Naive thymus-derived CD4-positive, alpha-beta T cell (primary cell): ENCODE measurements at regions of chr16 and their contacts with region 1.

Region 1: GRCh38 chr16:70251629-70252354 is at the start of gene EXOSC6:
- DNase-seq: peak; percentile 85 to 94 (median 93)
- ATAC-seq: peak; percentile 99
- H3K4me3 ChIP-seq: peak within 1 kb of the TSS; percentile 67
- H3K4me3 Mint-ChIP-seq: peak within 1 kb of the TSS; percentile 82 to 93 (median 90)
- H3K27ac ChIP-seq: peak within 1 kb of the TSS; percentile 85
- H3K27ac Mint-ChIP-seq: peak within 1 kb of the TSS; percentile 86 to 96 (median 92)
- H3K4me1 ChIP-seq: peaks cover 5 to 15% of the 10 kb centered on the region in 2 donors
- H3K4me1 Mint-ChIP-seq: peaks cover 0 to 41% (median 24%) of the 10 kb centered on the region in 7 donors
- H3K27me3 ChIP-seq: no peaks in the 10 kb centered on the region
- H3K27me3 Mint-ChIP-seq: no peaks in the 10 kb centered on the region
- total RNA-seq, gene EXOSC6: 25.5 to 45.9 (median 36.4) TPM

Region 2: GRCh38 chr16:70267516-70267915 is 15.7 kb after region 1 on chr16:
- CTCF ChIA-PET with region 1: interaction called, 3 read pairs
- POLR2A ChIA-PET with region 1: interaction called, 10 read pairs
- intact Hi-C with region 1: loop called in 1 of 2 experiments (anchors 1 kb)
- DNase-seq: peak in 1 of 9 donors; percentile 22
- ATAC-seq: peak; percentile 61
- H3K4me3 ChIP-seq: no peak overlapping the region
- H3K4me3 Mint-ChIP-seq: no peak overlapping the region
- H3K27ac ChIP-seq: no peak overlapping the region
- H3K27ac Mint-ChIP-seq: peak overlapping the region in 4 of 9 donors; percentile 2 to 57 (median 38)
- H3K4me1 ChIP-seq: no peaks in the 10 kb centered on the region
- H3K4me1 Mint-ChIP-seq: peaks cover 0 to 4% (median 0%) of the 10 kb centered on the region in 7 donors
- H3K27me3 ChIP-seq: no peaks in the 10 kb centered on the region
- H3K27me3 Mint-ChIP-seq: no peaks in the 10 kb centered on the region

Region 3: DNA sequence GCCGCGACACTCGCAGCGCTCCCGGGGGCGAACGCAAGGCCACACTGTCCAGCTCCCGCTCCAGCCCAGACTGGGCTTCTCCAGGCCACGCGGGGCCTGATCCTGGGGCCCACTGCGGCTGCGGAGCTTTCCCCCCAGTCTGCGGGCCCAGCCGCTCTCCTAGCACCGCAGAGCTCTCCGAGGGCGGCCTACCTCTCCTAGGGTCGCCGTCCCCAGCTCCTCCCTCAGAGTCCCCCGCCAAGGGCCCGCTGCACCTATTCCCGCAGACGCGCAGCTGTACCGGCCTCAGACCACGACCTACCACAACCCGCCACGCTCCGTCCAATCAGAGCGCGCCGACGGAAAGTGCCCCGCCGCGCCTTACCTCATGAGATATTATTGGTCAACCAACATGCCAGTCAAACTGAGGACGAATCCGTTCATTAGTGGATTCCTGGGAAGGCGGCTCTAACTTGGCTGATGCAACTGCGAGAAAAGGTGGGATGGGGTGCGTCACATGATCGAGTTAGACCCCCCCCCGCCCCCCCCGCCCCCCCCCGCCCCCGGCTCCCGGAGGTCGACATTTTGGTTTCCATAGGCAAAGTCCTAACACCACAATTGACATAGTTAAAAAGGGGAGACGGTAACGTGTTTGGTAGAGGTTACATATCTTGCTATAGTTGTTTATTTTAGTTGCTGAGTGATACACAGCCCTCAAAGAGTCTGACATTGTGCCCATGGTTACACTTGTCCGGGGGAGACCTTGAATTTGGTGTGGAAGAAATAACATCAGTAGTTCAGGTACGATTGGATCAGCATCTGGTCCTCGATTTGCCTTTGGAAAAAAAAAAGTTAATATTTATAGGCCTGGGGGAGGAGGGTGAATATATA is 37.7 kb after region 1 on chr16 and contains the start of gene AARS1:
- CTCF ChIA-PET with region 1: interaction called, 7 read pairs
- POLR2A ChIA-PET with region 1: interaction called, 6 read pairs
- intact Hi-C with region 1: loop called (anchors 1 kb)
- DNase-seq: peak; percentile 79 to 97 (median 96)
- ATAC-seq: peak; percentile 98
- H3K4me3 ChIP-seq: peak within 1 kb of the TSS; percentile 65
- H3K4me3 Mint-ChIP-seq: peak within 1 kb of the TSS; percentile 90 to 100 (median 98)
- H3K27ac ChIP-seq: peak within 1 kb of the TSS; percentile 85
- H3K27ac Mint-ChIP-seq: peak within 1 kb of the TSS; percentile 95 to 99 (median 98)
- H3K4me1 ChIP-seq: no peaks in the 10 kb centered on the region
- H3K4me1 Mint-ChIP-seq: peaks cover 6 to 37% (median 25%) of the 10 kb centered on the region in 7 donors
- H3K27me3 ChIP-seq: no peaks in the 10 kb centered on the region
- H3K27me3 Mint-ChIP-seq: peaks cover 0 to 2% (median 0%) of the 10 kb centered on the region in 5 donors
- total RNA-seq, gene AARS1: 24.2 to 96.7 (median 94.0) TPM

Region 4: DNA sequence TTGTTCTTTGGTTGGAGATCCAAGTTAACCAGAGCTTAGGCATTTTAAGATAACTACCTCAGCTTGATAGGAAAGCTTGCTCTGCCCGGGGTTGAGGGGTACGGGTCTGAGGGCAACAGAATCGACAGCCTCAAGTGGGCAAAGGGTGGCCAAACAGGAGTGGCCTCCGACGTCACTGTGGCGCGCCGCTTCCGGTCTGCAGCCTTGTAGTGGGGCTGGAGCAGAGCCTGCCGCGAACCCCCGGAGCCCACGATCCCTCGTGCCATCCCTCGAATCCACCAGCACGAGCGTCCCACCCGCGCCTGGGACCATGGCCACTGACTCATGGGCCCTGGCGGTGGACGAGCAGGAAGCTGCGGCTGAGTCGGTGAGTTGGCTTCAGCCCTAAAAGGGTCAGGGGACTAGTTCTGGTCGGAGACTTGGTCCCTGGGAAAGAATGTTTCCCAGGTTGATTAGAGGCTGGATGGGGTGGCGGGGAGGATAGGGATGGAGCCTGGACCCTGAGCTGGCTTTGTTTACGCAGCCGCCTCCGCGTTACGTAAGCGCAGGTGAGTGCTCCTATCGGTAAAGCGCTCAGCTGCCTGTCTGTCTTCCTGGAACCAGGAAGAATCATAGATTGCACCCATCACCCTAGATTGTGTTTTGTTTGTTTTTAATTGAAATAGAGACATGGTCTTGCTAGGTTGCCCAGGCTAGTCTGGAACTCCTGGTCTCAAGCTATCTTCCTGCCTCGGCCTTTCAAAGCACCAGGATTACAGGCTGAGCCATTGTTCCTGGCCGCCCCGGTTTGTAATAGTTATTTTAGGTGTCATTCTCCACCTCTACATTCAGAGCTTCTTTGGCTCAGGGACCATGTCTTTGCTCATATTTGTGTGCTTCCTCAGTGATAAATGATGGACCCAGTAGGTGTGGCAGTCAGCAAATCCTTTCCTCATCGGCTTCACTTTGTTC is 47.5 kb after region 1 on chr16 and contains the start of gene DDX19B:
- CTCF ChIA-PET with region 1: no interaction called
- POLR2A ChIA-PET with region 1: interaction called, 13 read pairs
- intact Hi-C with region 1: loop called in 1 of 2 experiments (anchors 2 kb)
- DNase-seq: peak; percentile 28 to 69 (median 51)
- ATAC-seq: peak; percentile 83
- H3K4me3 ChIP-seq: peak within 1 kb of the TSS; percentile 86
- H3K4me3 Mint-ChIP-seq: peak within 1 kb of the TSS; percentile 89 to 98 (median 96)
- H3K27ac ChIP-seq: peak within 1 kb of the TSS; percentile 97
- H3K27ac Mint-ChIP-seq: peak within 1 kb of the TSS; percentile 93 to 100 (median 99)
- H3K4me1 ChIP-seq: peaks cover 0 to 4% of the 10 kb centered on the region in 2 donors
- H3K4me1 Mint-ChIP-seq: peaks cover 23 to 46% (median 42%) of the 10 kb centered on the region in 7 donors
- H3K27me3 ChIP-seq: no peaks in the 10 kb centered on the region
- H3K27me3 Mint-ChIP-seq: no peaks in the 10 kb centered on the region
- total RNA-seq, gene DDX19B: 23.6 to 29.9 (median 27.8) TPM

Region 5: GRCh38 chr16:70320121-70320520 is 68.3 kb after region 1 on chr16:
- CTCF ChIA-PET with region 1: no interaction called
- POLR2A ChIA-PET with region 1: no interaction called
- intact Hi-C with region 1: no loop called
- DNase-seq: no peak
- ATAC-seq: no peak
- H3K4me3 ChIP-seq: no peak overlapping the region
- H3K4me3 Mint-ChIP-seq: no peak overlapping the region
- H3K27ac ChIP-seq: no peak overlapping the region
- H3K27ac Mint-ChIP-seq: no peak overlapping the region
- H3K4me1 ChIP-seq: no peaks in the 10 kb centered on the region
- H3K4me1 Mint-ChIP-seq: peaks cover 0 to 2% (median 0%) of the 10 kb centered on the region in 7 donors
- H3K27me3 ChIP-seq: no peaks in the 10 kb centered on the region
- H3K27me3 Mint-ChIP-seq: no peaks in the 10 kb centered on the region

Region 6: GRCh38 chr16:70342016-70342415 is 90.2 kb after region 1 on chr16:
- CTCF ChIA-PET with region 1: no interaction called
- POLR2A ChIA-PET with region 1: no interaction called
- intact Hi-C with region 1: loop called (anchors 1 kb)
- DNase-seq: no peak
- ATAC-seq: no peak
- H3K4me3 ChIP-seq: no peak overlapping the region
- H3K4me3 Mint-ChIP-seq: no peak overlapping the region
- H3K27ac ChIP-seq: no peak overlapping the region
- H3K27ac Mint-ChIP-seq: peak overlapping the region in 3 of 9 donors; percentile 37 to 77 (median 74)
- H3K4me1 ChIP-seq: peaks cover 5 to 6% of the 10 kb centered on the region in 2 donors
- H3K4me1 Mint-ChIP-seq: peaks cover 5 to 16% (median 10%) of the 10 kb centered on the region in 7 donors
- H3K27me3 ChIP-seq: no peaks in the 10 kb centered on the region
- H3K27me3 Mint-ChIP-seq: no peaks in the 10 kb centered on the region

Region 7: DNA sequence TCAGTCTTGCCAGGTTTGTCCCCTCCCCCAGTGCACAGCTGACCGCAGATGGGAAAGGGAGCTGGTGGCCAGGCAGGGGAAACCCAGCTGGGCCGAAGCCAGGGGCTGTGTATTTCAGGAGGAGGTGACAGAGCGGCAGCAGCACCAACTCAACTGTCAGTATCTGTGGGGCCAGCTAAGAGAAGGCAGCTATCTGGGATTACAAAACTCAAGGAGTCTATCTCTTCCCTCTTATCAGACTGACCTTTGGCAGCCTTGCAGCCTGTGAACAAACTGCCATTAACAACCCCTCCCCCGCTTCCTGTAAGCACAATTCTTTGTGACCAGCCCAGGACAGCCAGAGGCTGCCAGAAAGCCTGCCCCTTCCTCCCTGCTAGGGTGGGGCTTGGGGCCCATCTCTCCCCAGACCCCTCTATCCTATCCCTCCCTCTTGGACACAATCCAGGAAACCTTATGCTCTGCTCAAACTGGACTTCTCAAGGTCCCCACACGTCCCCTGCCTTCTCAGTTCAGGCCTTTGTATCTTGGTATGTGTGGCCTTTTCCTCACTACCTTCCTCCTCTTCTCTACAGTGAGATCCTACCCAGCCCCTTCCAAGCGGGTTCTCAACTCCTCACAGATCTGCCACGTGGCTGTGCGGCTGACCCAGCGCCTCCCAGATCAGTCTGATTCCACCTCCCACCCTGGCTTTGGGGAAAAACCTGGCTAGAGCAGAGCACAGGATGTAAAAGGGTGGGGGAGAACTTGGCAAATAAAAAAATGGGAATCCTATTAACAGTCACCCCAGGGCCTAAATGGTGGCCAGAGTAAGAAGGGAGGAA is 176.6 kb after region 1 on chr16:
- CTCF ChIA-PET with region 1: no interaction called
- POLR2A ChIA-PET with region 1: no interaction called
- intact Hi-C with region 1: no loop called
- DNase-seq: peak in 1 of 9 donors; percentile 75
- ATAC-seq: peak; percentile 52
- H3K4me3 ChIP-seq: no peak overlapping the region
- H3K4me3 Mint-ChIP-seq: peak overlapping the region; percentile 2 to 64 (median 30)
- H3K27ac ChIP-seq: no peak overlapping the region
- H3K27ac Mint-ChIP-seq: peak overlapping the region in 8 of 9 donors; percentile 51 to 88 (median 83)
- H3K4me1 ChIP-seq: peaks cover 20 to 32% of the 10 kb centered on the region in 2 donors
- H3K4me1 Mint-ChIP-seq: peaks cover 38 to 63% (median 55%) of the 10 kb centered on the region in 7 donors
- H3K27me3 ChIP-seq: no peaks in the 10 kb centered on the region
- H3K27me3 Mint-ChIP-seq: no peaks in the 10 kb centered on the region

Region 8: DNA sequence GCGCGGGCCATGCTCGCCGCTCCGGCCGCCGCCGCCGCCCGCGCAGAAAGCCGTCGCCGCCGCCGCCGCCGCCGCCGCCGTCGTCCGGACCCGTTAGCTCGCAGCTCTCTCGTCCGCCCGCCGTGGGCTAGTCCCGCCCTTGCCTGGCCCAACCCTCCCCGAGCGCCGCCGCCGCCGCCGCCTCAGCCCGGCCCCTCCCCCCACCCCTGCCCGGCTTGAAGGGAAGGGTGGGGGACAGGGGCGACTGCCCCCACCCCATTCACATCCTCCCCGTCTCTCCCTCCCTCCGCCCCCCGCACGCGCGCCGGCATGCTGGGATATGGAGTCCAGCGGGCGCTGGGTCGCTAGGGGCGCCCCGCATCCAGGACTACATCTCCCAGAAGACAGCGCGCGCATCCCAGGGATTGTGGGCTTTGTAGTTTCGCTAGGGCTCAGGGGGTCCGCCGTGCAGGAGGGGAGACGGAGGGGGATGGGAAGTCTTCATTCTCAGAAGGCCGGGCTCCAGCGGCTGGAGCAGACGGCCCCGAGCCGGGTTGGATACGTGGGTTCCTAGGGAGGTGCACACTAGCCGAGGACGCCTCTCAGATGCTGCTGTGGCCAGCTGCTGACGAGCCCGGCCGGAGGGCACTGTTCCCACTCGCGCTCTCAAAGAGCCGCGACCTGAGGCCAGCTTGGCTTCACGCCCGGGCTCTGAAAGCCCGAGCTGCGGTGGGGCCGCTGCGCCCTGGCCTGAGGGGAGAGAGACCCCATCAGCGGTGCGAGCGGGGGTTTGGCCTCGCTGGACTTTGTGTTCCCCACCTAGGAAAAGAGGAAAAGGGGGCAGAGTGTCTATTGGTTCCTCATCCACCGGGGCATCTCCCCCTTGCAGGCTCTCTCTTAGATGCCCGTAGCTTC is 187.4 kb after region 1 on chr16 and contains the start of gene ST3GAL2:
- CTCF ChIA-PET with region 1: no interaction called
- POLR2A ChIA-PET with region 1: no interaction called
- intact Hi-C with region 1: loop called in 1 of 2 experiments (anchors 2 kb)
- DNase-seq: peak; percentile 84 to 94 (median 90)
- ATAC-seq: peak; percentile 99
- H3K4me3 ChIP-seq: peak within 1 kb of the TSS; percentile 82
- H3K4me3 Mint-ChIP-seq: peak within 1 kb of the TSS; percentile 92 to 99 (median 98)
- H3K27ac ChIP-seq: peak within 1 kb of the TSS; percentile 58
- H3K27ac Mint-ChIP-seq: peak within 1 kb of the TSS; percentile 84 to 97 (median 93)
- H3K4me1 ChIP-seq: peaks cover 11 to 23% of the 10 kb centered on the region in 2 donors
- H3K4me1 Mint-ChIP-seq: peaks cover 18 to 46% (median 37%) of the 10 kb centered on the region in 7 donors
- H3K27me3 ChIP-seq: no peaks in the 10 kb centered on the region
- H3K27me3 Mint-ChIP-seq: no peaks in the 10 kb centered on the region
- total RNA-seq, gene ST3GAL2: 16.6 to 35.9 (median 30.4) TPM

Region 9: GRCh38 chr16:72093448-72094265 is 1841.9 kb after region 1 on chr16 and contains the starts of genes DHX38 and TXNL4B:
- CTCF ChIA-PET with region 1: no interaction called
- POLR2A ChIA-PET with region 1: no interaction called
- intact Hi-C with region 1: loop called in 1 of 2 experiments (anchors 10 kb)
- DNase-seq: peak; percentile 70 to 95 (median 92)
- ATAC-seq: peak; percentile 98
- H3K4me3 ChIP-seq: peak within 1 kb of the TSS; percentile 86
- H3K4me3 Mint-ChIP-seq: peak within 1 kb of the TSS; percentile 94 to 100 (median 98)
- H3K27ac ChIP-seq: peak within 1 kb of the TSS; percentile 93
- H3K27ac Mint-ChIP-seq: peak within 1 kb of the TSS; percentile 92 to 100 (median 99)
- H3K4me1 ChIP-seq: peaks cover 21 to 24% of the 10 kb centered on the region in 2 donors
- H3K4me1 Mint-ChIP-seq: peaks cover 33 to 70% (median 63%) of the 10 kb centered on the region in 7 donors
- H3K27me3 ChIP-seq: no peaks in the 10 kb centered on the region
- H3K27me3 Mint-ChIP-seq: no peaks in the 10 kb centered on the region
- total RNA-seq, gene DHX38: 90.1 to 113 (median 104) TPM
- total RNA-seq, gene TXNL4B: 12.5 to 20.9 (median 18.5) TPM